AG04449 (cell line): ENCODE measurements at regions of chr10 and their contacts with region 1.

Region 1: GRCh38 chr10:31709028-31709427 is 219.6 kb downstream of the ARHGAP12 start:
- DNase-seq: no peak
- H3K4me3 ChIP-seq: no peak overlapping the region
- CTCF ChIP-seq: no peak

Region 2: GRCh38 chr10:31669357-31669756 is 39.7 kb before region 1 on chr10:
- CTCF ChIA-PET with region 1: no interaction called
- POLR2A ChIA-PET with region 1: no interaction called
- DNase-seq: no peak
- H3K4me3 ChIP-seq: no peak overlapping the region
- CTCF ChIP-seq: no peak

Region 3: GRCh38 chr10:31808258-31809218 is 99.5 kb after region 1 on chr10:
- CTCF ChIA-PET with region 1: interaction called, 16 read pairs
- POLR2A ChIA-PET with region 1: no interaction called
- DNase-seq: peak; percentile 33
- H3K4me3 ChIP-seq: peak overlapping the region; percentile 27
- CTCF ChIP-seq: peak; percentile 8